HEK293T (cell line): ENCODE measurements at regions of chr12 and their contacts with region 1.

Region 1: GRCh38 chr12:55996715-55997534 is at the start of gene SUOX:
- DNase-seq: peak; percentile 94

Region 2: DNA sequence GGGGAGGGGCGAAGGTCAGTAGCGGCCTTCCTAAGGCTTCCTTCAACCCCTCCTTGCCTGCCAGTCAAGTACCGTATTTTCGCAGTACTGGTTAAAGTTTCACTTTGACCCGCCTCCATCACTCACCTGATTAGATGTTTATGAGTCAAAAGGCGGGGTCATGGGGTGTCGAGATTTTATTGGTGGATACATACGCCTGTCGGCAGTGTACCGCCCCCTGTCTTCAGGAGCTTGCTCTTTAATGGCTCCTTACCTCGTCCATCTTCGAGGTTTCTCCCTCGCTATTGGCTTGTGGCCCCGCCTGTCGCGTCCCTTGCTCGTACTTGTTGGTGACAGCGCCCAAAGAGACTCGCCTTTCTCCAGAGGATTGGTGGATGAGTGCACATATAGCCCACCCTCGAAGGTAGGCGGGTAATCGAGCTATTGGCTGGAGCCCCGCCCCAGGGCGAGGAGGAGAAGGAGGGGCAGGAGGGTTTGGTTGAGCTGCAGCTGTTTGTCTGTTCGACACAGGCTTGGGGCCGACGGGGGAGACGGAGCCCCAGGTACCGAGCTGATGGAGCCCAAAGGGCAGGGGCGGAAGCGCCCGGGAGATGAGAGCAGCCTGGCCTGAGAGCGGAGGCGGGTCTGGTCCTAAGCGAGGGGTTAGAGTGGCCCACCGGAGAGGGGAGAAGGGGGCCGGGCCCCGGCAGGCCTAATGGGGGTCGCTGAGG is 23.2 kb before region 1 on chr12 and contains the start of gene RAB5B:
- CTCF ChIA-PET with region 1: interaction called, 11 read pairs
- POLR2A ChIA-PET with region 1: interaction called, 26 read pairs
- DNase-seq: peak; percentile 94

Region 3: GRCh38 chr12:55982319-55982936 is 14.5 kb before region 1 on chr12:
- CTCF ChIA-PET with region 1: interaction called, 14 read pairs
- POLR2A ChIA-PET with region 1: interaction called, 6 read pairs
- DNase-seq: no peak

Region 4: DNA sequence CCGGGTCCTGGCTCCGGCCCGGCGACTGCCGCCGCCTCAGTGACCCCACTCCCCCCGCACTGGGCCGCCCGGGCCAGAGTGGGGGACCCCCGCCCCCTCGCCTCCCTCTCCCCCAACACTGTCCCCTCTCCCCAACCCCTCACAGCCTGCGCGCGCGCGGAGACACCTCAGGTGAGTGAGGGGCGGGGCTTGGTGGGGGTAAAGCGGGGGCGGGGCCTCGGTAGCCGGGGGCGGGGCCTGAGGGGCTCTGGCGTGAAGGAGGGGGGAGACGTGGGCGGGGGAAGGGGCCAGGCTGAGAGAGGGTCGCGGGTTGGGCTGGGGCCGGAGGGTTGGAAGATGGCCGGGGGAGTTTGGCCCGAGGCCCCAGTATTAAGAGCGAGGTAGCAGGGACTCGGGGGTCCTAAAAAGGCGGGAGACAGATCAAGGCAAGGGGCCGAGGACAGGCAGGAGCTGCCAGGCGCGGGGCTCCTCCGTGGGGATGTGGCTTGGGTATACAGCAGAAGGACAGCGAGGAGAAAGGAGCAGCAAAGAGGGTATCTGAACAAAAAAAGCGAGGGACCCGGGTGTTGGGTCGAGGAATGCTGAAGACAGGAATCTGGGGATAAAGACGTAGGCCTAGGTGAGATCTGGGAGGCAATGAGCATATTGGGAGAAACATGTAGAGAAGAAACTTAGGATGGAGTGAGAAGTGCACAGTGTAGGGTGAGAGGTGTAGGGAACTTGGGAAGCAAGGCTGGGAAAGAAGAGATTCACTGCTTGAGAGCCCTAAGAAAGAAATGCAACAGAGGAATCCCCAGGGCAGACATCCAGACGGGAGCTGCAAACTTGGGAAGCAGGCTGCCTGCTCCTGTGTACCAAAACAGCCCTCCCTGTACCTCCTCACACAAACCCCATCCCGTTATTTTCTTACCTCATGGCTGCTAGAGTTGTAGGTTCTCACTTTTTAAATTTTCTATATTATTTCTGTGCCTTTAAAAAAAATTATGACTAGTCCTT is 10.9 kb after region 1 on chr12:
- CTCF ChIA-PET with region 1: interaction called, 8 read pairs
- POLR2A ChIA-PET with region 1: interaction called, 27 read pairs
- DNase-seq: peak; percentile 75

Region 5: GRCh38 chr12:56029666-56030293 is 32.9 kb after region 1 on chr12:
- CTCF ChIA-PET with region 1: interaction called, 21 read pairs
- POLR2A ChIA-PET with region 1: interaction called, 8 read pairs
- DNase-seq: peak; percentile 63

Region 6: DNA sequence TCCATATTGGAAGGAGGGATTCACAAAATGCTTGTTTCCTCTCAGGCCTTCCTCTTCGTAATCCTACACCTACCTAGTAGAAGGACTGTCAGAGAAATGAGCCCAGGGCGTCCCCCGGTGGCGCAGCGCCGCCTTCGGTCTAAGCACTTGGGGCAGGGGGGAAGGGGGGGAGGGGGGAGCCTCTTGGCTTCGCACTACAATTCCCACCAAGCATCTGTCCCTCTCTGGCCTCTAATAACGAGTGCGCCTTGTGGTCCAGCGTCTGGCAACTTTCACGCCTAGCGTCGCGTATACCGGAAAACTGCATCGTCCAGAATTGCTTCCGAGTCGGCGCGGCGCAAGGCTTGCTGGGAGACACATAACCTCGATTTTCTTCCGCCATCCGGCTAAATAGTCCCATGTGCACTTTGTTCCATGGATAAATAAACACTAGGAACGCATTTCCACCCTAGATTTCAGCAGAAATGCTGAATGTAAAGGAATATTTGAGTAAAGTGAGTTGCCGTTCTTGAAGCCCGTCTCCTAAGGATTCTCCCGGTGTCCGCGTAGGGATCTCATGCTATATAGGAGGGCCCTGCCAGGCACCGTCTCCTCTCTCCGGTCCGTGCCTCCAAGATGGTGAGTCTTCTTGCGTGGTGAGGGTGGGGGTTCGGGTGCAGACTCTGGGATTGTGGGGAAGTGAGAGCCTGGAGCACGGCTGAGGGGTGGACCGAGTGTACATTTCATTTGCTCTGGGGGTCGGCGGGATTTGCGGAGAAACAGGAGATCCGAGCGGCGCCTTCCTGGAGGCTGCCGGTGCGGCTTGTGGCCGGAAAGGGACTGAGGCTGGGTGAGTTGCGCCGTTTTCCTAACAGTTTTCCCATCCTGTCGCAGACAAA is 44.9 kb after region 1 on chr12 and contains the start of gene RPS26:
- CTCF ChIA-PET with region 1: interaction called, 5 read pairs
- POLR2A ChIA-PET with region 1: interaction called, 15 read pairs
- DNase-seq: peak; percentile 89